ENCODE measurements at regions of chr16 and their contacts with region 1.

Region 1: DNA sequence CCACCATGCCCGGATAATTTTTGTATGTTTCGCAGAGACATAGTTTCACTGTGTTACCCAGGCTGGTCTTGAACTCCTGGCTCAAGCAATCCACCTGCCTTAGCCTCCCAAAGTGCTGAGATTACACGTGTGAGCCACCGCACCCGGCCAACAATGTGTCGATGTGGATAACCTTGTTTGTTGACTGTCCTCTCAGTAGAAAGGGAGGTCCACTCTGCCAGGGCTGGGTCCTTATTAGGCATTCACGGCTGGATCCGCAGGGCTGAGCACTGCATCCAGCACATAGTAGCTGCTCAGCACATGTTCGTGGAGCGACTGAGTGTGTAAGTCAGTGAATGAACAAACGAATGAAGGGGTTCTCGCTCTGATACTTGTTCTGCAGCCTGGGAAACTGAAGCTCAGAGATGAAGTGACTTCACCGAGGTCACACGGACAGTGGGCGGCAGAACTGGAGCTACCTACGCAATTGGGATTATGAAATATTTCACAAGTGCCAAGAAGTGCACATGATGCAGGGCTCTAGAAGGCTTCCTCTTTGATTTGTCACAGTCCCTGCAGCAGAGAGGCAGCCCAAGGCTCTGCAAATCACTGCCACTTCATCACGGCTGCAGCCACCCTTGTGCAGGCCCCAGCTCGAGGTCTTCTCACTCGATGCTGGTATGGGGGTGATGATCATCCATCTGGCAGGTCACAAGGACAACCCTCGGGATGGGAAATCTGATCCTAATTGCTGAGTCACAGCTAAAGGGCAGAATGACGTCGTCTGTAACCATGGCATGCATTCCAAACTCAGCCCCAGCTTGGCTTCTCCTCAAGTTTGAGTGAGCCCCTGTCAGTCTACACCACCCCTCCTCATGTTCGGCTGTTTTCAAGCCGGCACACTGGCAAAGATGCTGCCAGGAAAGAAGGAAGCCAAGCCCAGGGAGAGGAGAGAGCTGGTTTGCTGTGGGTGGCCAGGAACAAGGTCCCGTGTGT is 28.0 kb upstream of the SNN start:
- DNase-seq: no peak
- ATAC-seq: peak; percentile 89
- H3K4me3 ChIP-seq: no peak overlapping the region
- H3K4me3 Mint-ChIP-seq: peak overlapping the region in 2 of 10 donors; percentile 28 to 63
- H3K27ac ChIP-seq: no peak overlapping the region
- H3K27ac Mint-ChIP-seq: peak overlapping the region in 5 of 9 donors; percentile 14 to 82 (median 49)
- H3K4me1 ChIP-seq: peaks cover 11 to 14% of the 10 kb centered on the region in 2 donors
- H3K4me1 Mint-ChIP-seq: peaks cover 15 to 34% (median 22%) of the 10 kb centered on the region in 7 donors
- H3K27me3 ChIP-seq: no peaks in the 10 kb centered on the region
- H3K27me3 Mint-ChIP-seq: peaks cover 0 to 29% (median 0%) of the 10 kb centered on the region in 5 donors

Region 2: GRCh38 chr16:10964039-10964890 is 675.9 kb before region 1 on chr16:
- CTCF ChIA-PET with region 1: interaction called, 3 read pairs
- POLR2A ChIA-PET with region 1: no interaction called
- intact Hi-C with region 1: loop called (anchors 1 to 5 kb)
- DNase-seq: peak; percentile 55 to 84 (median 69)
- ATAC-seq: peak; percentile 81
- H3K4me3 ChIP-seq: peak overlapping the region; percentile 3
- H3K4me3 Mint-ChIP-seq: peak overlapping the region in 6 of 10 donors; percentile 4 to 83 (median 52)
- H3K27ac ChIP-seq: no peak overlapping the region
- H3K27ac Mint-ChIP-seq: peak overlapping the region in 6 of 9 donors; percentile 47 to 91 (median 72)
- H3K4me1 ChIP-seq: peaks cover 11 to 18% of the 10 kb centered on the region in 2 donors
- H3K4me1 Mint-ChIP-seq: peaks cover 15 to 62% (median 28%) of the 10 kb centered on the region in 7 donors
- H3K27me3 ChIP-seq: no peaks in the 10 kb centered on the region
- H3K27me3 Mint-ChIP-seq: no peaks in the 10 kb centered on the region

Region 3: GRCh38 chr16:11530171-11530940 is 109.9 kb before region 1 on chr16:
- CTCF ChIA-PET with region 1: interaction called, 70 read pairs
- POLR2A ChIA-PET with region 1: interaction called, 4 read pairs
- intact Hi-C with region 1: loop called (anchors 1 kb)
- DNase-seq: no peak
- ATAC-seq: no peak
- H3K4me3 ChIP-seq: no peak overlapping the region
- H3K4me3 Mint-ChIP-seq: no peak overlapping the region
- H3K27ac ChIP-seq: no peak overlapping the region
- H3K27ac Mint-ChIP-seq: no peak overlapping the region
- H3K4me1 ChIP-seq: peaks cover 0 to 6% of the 10 kb centered on the region in 2 donors
- H3K4me1 Mint-ChIP-seq: peaks cover 5 to 12% (median 8%) of the 10 kb centered on the region in 7 donors
- H3K27me3 ChIP-seq: no peaks in the 10 kb centered on the region
- H3K27me3 Mint-ChIP-seq: peaks cover 0 to 24% (median 3%) of the 10 kb centered on the region in 5 donors

Region 4: DNA sequence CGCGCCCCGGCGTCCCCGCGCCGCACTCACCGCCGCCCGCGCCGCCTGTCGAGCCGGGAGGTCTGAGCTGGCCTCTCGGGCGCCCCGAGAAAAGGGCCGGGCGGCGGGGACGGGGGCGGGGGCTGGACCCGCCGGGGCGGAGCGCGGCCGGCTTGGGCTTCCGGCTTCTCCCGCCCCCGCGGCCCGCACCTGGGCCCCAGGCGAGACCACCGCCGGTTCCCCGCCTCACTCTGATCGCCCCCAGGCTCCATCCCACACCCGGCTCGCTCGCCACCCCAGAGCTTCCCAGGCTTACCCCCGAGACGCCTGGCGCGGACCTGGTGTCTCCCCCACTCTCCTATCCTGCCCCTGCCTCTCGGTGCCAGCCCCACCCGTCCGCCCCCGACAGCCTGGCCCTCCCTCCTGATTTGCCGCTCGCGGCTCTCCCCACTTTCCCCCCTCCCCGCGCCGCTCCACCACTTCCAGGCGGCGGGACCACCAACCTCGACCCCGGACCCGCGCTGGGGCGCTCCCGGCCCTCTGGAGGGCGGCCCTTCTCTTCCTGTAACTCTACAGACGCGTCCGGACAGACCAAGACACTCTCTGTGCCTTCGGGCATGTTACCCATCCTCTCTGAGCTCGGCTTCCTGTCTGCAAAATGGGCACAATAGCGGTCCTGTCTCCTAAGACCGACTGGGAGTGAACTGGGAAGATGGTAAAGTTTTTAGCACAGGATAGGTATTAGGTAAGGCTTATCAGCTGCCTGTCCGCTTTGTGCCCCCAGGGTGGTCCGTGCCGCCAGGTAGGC is 53.2 kb before region 1 on chr16 and contains the start of gene LITAF:
- CTCF ChIA-PET with region 1: interaction called, 12 read pairs
- POLR2A ChIA-PET with region 1: interaction called, 6 read pairs
- intact Hi-C with region 1: loop called (anchors 1 to 2 kb)
- DNase-seq: peak in 8 of 9 donors; percentile 52 to 75 (median 57)
- ATAC-seq: peak; percentile 71
- H3K4me3 ChIP-seq: peak within 1 kb of the TSS; percentile 88
- H3K4me3 Mint-ChIP-seq: peak within 1 kb of the TSS; percentile 91 to 100 (median 96)
- H3K27ac ChIP-seq: peak within 1 kb of the TSS; percentile 94
- H3K27ac Mint-ChIP-seq: peak within 1 kb of the TSS; percentile 90 to 99 (median 97)
- H3K4me1 ChIP-seq: peaks cover 32 to 38% of the 10 kb centered on the region in 2 donors
- H3K4me1 Mint-ChIP-seq: peaks cover 29 to 45% (median 37%) of the 10 kb centered on the region in 7 donors
- H3K27me3 ChIP-seq: no peaks in the 10 kb centered on the region
- H3K27me3 Mint-ChIP-seq: peaks cover 0 to 7% (median 0%) of the 10 kb centered on the region in 5 donors
- total RNA-seq, gene LITAF: 126 to 278 (median 208) TPM

Region 5: GRCh38 chr16:11619327-11619851 is 20.8 kb before region 1 on chr16:
- CTCF ChIA-PET with region 1: interaction called, 12 read pairs
- POLR2A ChIA-PET with region 1: interaction called, 46 read pairs
- intact Hi-C with region 1: loop called in 1 of 2 experiments (anchors 1 kb)
- DNase-seq: peak in 5 of 9 donors; percentile 39 to 54 (median 52)
- ATAC-seq: peak; percentile 75
- H3K4me3 ChIP-seq: peak overlapping the region; percentile 47
- H3K4me3 Mint-ChIP-seq: peak overlapping the region; percentile 68 to 95 (median 76)
- H3K27ac ChIP-seq: peak overlapping the region; percentile 77
- H3K27ac Mint-ChIP-seq: peak overlapping the region; percentile 76 to 100 (median 98)
- H3K4me1 ChIP-seq: peaks cover 52 to 71% of the 10 kb centered on the region in 2 donors
- H3K4me1 Mint-ChIP-seq: peaks cover 52 to 92% (median 60%) of the 10 kb centered on the region in 7 donors
- H3K27me3 ChIP-seq: no peaks in the 10 kb centered on the region
- H3K27me3 Mint-ChIP-seq: no peaks in the 10 kb centered on the region

Region 6: GRCh38 chr16:11715246-11715947 is 75.2 kb after region 1 on chr16:
- CTCF ChIA-PET with region 1: interaction called, 7 read pairs
- POLR2A ChIA-PET with region 1: no interaction called
- intact Hi-C with region 1: loop called (anchors 1 to 10 kb)
- DNase-seq: no peak
- ATAC-seq: no peak
- H3K4me3 ChIP-seq: no peak overlapping the region
- H3K4me3 Mint-ChIP-seq: no peak overlapping the region
- H3K27ac ChIP-seq: no peak overlapping the region
- H3K27ac Mint-ChIP-seq: peak overlapping the region in 5 of 9 donors; percentile 6 to 79 (median 48)
- H3K4me1 ChIP-seq: peaks cover 0 to 3% of the 10 kb centered on the region in 2 donors
- H3K4me1 Mint-ChIP-seq: peaks cover 4 to 38% (median 22%) of the 10 kb centered on the region in 7 donors
- H3K27me3 ChIP-seq: no peaks in the 10 kb centered on the region
- H3K27me3 Mint-ChIP-seq: no peaks in the 10 kb centered on the region